Caco-2 (cell line): ENCODE measurements at regions of chr9 and their contacts with region 1.

Region 1: DNA sequence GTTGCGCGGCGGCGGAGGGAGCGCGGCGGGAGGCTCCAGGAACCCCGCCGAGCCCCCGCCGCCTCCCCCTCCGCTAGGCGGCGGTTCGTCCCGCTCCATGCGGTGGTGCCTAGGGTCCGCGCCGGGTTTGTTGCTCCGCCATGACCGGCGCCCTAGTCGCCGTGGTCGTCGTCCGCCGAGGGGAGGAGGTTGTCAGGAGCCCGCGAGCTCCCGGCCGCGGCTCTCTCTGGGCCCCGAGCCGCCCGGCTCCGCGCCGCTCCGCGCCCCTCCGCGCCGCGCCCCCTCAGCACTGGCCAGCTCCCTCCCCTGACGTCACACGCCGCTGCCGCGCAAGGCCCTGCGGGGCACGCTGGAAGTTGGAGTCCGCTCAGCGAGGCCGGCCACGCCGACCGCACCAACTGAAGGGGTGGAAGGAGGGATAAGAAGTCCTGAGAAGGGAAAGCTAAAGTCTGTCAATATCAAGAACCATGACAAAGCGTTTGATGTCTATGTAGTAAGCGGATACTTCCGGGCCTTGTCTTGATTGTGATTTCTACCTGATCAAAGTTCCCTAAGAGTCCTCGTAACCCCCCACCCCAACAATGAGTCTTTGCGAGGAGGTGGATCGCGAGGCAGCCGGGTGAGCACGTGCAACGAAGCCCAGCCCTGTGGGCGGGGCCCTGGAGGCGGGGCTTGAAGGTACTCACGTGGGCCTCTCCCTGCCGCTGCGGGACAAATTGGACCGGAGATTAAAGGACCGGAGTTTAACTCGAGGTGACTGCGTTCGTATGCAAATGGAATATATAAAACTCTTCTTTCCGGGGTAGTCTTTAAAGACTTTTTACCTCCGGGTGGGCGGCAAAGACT is at the start of gene NR6A1:
- DNase-seq: peak; percentile 98
- H3K4me3 ChIP-seq: peak within 1 kb of the TSS; percentile 98
- H3K4me3 Mint-ChIP-seq: peak within 1 kb of the TSS; percentile 100
- H3K27ac Mint-ChIP-seq: peak within 1 kb of the TSS; percentile 98
- H3K4me1 ChIP-seq: no peaks in the 10 kb centered on the region
- H3K4me1 Mint-ChIP-seq: peaks cover 18% of the 10 kb centered on the region
- H3K27me3 ChIP-seq: no peaks in the 10 kb centered on the region
- H3K27me3 Mint-ChIP-seq: no peaks in the 10 kb centered on the region
- CTCF ChIP-seq: peak; percentile 32 to 46
- total RNA-seq, gene NR6A1: 30.6 and 33.6 TPM in 2 replicates

Region 2: DNA sequence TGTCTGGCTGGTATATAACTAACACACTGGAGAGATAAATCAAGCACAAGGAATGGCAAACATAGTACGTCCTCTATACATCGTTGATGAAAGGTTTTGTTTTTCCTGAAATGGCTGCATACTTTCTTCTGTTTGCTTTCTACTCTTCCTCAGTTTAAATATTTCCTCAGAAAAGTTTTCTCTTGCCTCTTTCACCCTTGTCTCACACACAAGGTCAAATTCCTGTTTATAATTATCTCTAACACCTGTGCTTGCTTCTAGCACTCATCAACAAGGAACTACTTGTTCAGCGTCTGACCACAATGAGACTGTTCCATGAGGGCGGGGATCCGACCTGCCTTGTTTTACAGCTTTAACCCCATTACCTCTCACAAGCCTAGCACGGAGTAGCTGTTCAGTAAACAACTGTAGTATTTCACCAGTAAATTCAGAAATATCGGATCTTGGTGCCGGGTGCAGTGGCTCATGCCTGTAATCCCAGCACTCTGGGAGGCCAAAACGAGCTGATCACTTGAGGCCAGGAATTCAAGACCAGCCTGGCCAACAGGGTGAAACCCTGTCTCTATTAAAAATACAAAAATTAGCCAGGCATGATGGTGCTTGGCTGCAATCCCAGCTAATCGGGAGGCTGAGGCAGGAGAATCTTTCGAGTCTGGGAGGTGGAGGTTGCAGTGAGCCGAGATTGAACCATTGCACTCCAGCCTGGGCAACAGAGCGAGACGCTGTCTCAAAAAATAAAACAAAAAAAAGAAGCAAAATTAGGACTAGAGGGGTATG is 37.1 kb before region 1 on chr9:
- CTCF ChIA-PET with region 1: no interaction called
- POLR2A ChIA-PET with region 1: no interaction called
- intact Hi-C with region 1: loop called (anchors 1 kb)
- DNase-seq: peak; percentile 53 to 73
- H3K4me3 ChIP-seq: peak overlapping the region; percentile 19
- H3K4me3 Mint-ChIP-seq: peak overlapping the region; percentile 47
- H3K27ac Mint-ChIP-seq: peak overlapping the region; percentile 69
- H3K4me1 ChIP-seq: peaks cover 26% of the 10 kb centered on the region
- H3K4me1 Mint-ChIP-seq: peaks cover 21% of the 10 kb centered on the region
- H3K27me3 ChIP-seq: no peaks in the 10 kb centered on the region
- H3K27me3 Mint-ChIP-seq: no peaks in the 10 kb centered on the region
- CTCF ChIP-seq: no peak

Region 3: DNA sequence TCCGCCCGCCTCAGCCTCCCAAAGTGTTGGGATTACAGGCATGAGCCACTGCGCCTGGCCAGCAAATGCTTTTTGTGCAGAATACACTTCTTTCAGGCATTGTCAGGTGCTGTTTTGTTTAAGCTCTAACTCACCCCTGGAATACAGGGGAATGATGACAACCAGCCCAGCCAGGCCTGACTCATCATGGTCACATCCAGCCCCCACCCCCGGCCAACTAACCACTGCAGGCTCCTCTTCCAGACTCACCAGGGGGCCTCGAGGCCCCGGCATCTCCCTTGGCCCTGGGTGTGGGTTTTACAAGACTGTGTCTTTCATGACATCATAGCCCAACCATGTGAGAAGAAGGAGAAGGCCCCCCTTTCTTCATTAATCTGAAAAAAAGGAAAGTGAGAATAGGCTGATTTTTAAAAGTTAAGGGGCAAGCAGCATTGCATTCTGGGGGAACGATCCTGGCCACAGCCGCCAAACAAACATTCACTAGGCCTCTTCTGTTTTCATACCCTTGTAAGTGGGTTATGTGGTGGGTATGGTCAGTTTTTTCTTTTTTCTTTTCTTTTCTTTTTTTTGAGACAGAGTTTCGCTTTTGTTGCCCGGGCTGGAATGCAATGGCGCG is 41.3 kb after region 1 on chr9:
- CTCF ChIA-PET with region 1: interaction called, 9 read pairs
- POLR2A ChIA-PET with region 1: no interaction called
- intact Hi-C with region 1: loop called (anchors 1 kb)
- DNase-seq: peak; percentile 65 to 77
- H3K4me3 ChIP-seq: no peak overlapping the region
- H3K4me3 Mint-ChIP-seq: no peak overlapping the region
- H3K27ac Mint-ChIP-seq: peak overlapping the region; percentile 86
- H3K4me1 ChIP-seq: peaks cover 34% of the 10 kb centered on the region
- H3K4me1 Mint-ChIP-seq: peaks cover 30% of the 10 kb centered on the region
- H3K27me3 ChIP-seq: no peaks in the 10 kb centered on the region
- H3K27me3 Mint-ChIP-seq: no peaks in the 10 kb centered on the region
- CTCF ChIP-seq: no peak

Region 4: DNA sequence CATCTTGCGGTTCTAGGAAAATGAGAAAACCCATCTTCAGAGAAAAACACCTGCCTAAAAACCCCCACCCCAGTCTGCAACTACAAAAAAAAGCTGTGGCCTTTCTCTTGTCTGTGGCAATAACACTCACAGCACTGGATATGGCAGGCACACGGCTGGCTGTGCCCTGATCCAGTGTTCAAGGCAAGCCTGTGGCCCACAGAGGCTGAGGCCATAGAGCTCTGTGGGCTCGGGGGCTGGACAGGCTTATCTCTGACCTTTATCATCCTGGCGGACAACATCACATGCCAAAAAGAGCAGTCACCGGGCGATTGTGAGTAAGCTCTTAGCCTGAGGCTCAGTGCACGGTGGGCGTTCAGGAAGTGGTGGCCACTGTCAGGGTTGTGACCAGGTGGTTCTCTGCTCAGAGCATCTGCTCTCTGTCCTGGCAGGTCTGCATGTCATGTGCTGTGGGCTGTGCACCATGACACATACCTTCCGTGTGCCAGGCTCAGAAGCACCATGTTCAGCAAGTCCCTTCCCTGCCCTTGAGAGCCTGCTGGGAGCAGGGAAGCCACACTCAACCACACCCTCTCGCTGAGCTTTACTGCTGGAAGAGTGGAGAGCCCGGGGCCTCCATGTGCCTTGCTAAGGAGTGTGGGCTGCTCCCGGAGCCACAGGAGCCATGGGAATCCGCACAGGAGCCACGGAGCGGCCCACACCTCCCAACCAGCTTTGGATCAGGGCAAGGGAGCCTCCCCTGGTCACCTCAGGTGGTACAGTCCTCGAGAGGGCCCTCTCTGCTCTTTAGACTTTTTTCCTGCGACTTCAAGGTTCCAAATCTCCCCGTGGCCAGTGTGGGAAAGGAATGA is 47.4 kb after region 1 on chr9:
- CTCF ChIA-PET with region 1: interaction called, 3 read pairs
- POLR2A ChIA-PET with region 1: interaction called, 3 read pairs
- intact Hi-C with region 1: loop called (anchors 1 kb)
- DNase-seq: peak; percentile 82 to 92
- H3K4me3 ChIP-seq: no peak overlapping the region
- H3K4me3 Mint-ChIP-seq: peak overlapping the region; percentile 25
- H3K27ac Mint-ChIP-seq: peak overlapping the region; percentile 82
- H3K4me1 ChIP-seq: peaks cover 18% of the 10 kb centered on the region
- H3K4me1 Mint-ChIP-seq: peaks cover 8% of the 10 kb centered on the region
- H3K27me3 ChIP-seq: no peaks in the 10 kb centered on the region
- H3K27me3 Mint-ChIP-seq: no peaks in the 10 kb centered on the region
- CTCF ChIP-seq: no peak

Region 5: DNA sequence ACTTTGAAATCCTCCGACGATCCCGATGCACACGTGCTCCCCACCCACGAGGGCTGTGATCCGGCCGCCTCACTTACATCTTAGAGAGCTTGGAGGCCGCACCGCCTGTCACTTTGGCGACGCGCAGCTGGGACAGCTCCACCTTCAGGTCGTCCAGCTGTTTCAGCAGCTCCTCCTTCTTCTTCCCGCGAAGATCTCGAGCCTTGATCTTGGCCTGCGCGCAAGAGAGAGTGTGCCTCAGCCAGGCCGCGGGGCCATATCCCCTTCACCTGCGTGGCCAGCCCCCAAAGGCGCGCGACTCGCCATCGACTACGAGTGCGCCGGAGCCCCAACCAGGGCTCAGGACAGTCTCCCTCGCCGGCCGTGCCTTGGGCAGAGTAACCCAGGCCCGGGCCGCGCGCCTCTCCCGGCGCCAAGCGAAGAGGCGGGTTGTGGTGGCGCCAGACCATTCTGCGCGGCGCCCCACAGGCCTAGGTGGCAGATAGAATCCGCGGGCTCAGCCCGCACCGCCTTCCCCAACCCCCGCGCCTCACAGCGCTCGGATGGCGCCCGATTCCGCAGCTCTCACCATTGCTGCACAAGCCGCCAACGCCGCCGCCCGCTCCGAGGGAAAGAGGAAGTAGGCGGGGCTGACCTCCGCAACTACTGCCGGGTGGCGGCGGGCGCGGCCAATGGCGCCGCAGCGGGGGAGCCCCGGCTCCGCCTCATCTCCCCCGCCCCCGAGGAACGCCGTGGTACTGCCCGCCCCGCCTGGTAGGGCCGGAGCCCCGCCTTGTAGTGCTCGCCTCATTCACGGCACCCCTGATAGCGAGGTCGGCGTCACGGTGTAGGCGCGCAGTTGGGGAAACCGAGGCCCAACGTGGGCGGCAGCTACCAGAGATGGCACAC is 90.3 kb after region 1 on chr9 and contains the starts of genes ARPC5L and RPL35:
- CTCF ChIA-PET with region 1: interaction called, 325 read pairs
- POLR2A ChIA-PET with region 1: interaction called, 6 read pairs
- intact Hi-C with region 1: no loop called
- DNase-seq: peak; percentile 95 to 97
- H3K4me3 ChIP-seq: peak within 1 kb of the TSS; percentile 85
- H3K4me3 Mint-ChIP-seq: peak within 1 kb of the TSS; percentile 85
- H3K27ac Mint-ChIP-seq: peak within 1 kb of the TSS; percentile 95
- H3K4me1 ChIP-seq: peaks cover 10% of the 10 kb centered on the region; the same call in 1 of the 2 replicates
- H3K4me1 Mint-ChIP-seq: peaks cover 7% of the 10 kb centered on the region
- H3K27me3 ChIP-seq: no peaks in the 10 kb centered on the region
- H3K27me3 Mint-ChIP-seq: no peaks in the 10 kb centered on the region
- CTCF ChIP-seq: peak in 1 of 2 experiments; percentile 30
- total RNA-seq, gene ARPC5L: 59.0 and 60.1 TPM in 2 replicates
- total RNA-seq, gene RPL35: 1,528 and 1,598 TPM in 2 replicates

Region 6: DNA sequence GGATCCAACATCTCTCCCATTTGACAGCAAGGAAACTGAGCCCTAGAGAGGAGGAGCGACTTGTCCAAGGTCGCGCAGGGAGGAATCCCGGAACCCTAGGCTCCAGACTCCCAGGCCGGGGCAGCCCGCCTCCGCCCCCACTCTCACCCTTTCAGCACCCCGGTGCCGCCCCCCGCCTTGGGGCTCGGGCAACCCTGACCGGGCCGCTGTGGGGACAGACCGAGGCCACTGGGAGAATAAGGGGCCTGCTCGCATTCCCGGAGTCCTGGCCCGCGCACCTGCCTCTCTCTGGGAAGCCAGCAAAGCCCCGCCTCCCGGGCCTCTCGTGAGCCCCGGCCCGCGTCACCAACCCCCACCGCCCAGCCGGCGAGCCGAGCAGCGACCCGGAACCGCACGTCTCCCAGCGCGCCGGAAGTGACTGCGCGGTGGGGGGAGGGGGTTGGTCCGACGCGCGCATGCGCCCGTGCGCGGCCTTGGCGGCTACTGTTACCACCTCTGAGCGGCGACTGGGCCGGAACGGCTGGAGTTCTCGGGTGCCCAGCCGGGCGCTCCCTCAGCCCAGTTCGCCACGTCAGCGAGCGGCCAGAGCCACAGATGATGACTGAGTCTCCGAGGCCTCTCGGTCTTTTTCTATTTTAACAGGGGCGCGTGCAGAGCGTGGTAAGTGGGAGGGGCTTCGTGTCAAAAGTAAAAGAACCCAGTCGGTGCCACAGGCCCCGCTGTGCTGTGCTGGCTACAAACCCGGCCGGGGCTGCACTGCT is 169.6 kb after region 1 on chr9 and contains the start of gene GOLGA1:
- CTCF ChIA-PET with region 1: no interaction called
- POLR2A ChIA-PET with region 1: no interaction called
- intact Hi-C with region 1: loop called (anchors 5 kb)
- DNase-seq: peak; percentile 97 to 98
- H3K4me3 ChIP-seq: peak within 1 kb of the TSS; percentile 74
- H3K4me3 Mint-ChIP-seq: peak within 1 kb of the TSS; percentile 95
- H3K27ac Mint-ChIP-seq: peak within 1 kb of the TSS; percentile 95
- H3K4me1 ChIP-seq: peaks cover 5% of the 10 kb centered on the region; the same call in 1 of the 2 replicates
- H3K4me1 Mint-ChIP-seq: no peaks in the 10 kb centered on the region
- H3K27me3 ChIP-seq: no peaks in the 10 kb centered on the region
- H3K27me3 Mint-ChIP-seq: no peaks in the 10 kb centered on the region
- CTCF ChIP-seq: no peak
- total RNA-seq, gene GOLGA1: 18.7 and 18.9 TPM in 2 replicates

Region 7: DNA sequence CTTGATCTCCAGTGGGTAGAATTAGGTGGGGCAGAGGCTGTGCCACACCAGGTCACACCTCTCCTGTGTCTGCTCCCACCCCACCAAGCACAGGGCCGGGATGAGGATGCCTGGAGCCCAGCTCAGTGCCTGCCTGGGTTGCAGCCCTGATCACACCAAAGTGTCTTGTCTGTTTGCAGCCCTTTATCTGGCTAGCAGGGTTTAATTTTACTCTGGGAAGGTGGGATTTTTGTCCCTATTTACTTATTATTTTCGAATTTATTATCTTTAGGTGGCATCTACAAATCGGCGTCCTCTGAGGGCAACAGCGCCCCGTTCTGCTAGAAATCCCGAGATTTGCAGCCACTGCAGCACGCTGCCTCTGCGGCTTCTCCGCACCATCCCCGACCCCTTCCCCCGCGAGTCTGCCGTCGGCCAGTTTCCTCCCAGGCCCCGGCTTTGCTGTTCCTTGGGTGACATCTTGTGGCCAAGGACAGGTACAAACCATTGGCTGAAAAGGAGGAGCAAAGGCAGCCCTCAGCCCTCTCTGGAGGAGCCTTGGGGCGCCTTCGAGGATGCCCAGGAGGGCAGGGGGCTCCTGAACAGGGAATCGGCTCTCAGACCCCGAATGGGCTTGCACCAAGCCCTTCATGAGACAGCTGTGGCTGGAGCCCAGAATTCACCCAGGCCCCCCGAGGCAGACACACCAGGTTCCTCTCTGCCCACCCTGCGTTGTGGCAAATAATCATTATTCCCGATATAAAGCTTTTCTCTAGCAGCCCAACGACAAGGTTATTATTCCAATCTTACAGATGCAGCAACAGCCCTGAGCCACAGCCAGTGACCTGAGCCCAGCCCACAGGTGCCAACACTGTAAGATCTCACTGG is 603.4 kb after region 1 on chr9:
- CTCF ChIA-PET with region 1: no interaction called
- POLR2A ChIA-PET with region 1: no interaction called
- intact Hi-C with region 1: loop called (anchors 10 kb)
- DNase-seq: peak; percentile 81
- H3K4me3 ChIP-seq: peak overlapping the region; percentile 21
- H3K4me3 Mint-ChIP-seq: peak overlapping the region; percentile 67
- H3K27ac Mint-ChIP-seq: peak overlapping the region; percentile 44
- H3K4me1 ChIP-seq: no peaks in the 10 kb centered on the region
- H3K4me1 Mint-ChIP-seq: peaks cover 13% of the 10 kb centered on the region
- H3K27me3 ChIP-seq: no peaks in the 10 kb centered on the region
- H3K27me3 Mint-ChIP-seq: no peaks in the 10 kb centered on the region
- CTCF ChIP-seq: peak; percentile 80 to 88